B cell (primary cell): ENCODE measurements at regions of chr12 and their contacts with region 1.

Region 1: GRCh38 chr12:132144115-132144812 is at the starts of genes DDX51 and NOC4L:
- DNase-seq: peak; percentile 98
- ATAC-seq: peak; percentile 94
- H3K4me3 ChIP-seq: peak within 1 kb of the TSS; percentile 16 to 90 (median 69)
- H3K4me3 Mint-ChIP-seq: peak within 1 kb of the TSS; percentile 96
- H3K27ac ChIP-seq: peak within 1 kb of the TSS; percentile 47 to 95
- H3K27ac Mint-ChIP-seq: peak within 1 kb of the TSS; percentile 99
- H3K4me1 ChIP-seq: peaks cover 15 to 21% of the 10 kb centered on the region in 2 donors
- H3K4me1 Mint-ChIP-seq: peaks cover 27% of the 10 kb centered on the region
- H3K27me3 ChIP-seq: no peaks in the 10 kb centered on the region
- H3K27me3 Mint-ChIP-seq: no peaks in the 10 kb centered on the region
- CTCF ChIP-seq: no peak
- total RNA-seq, gene DDX51: 46.3 and 51.3 TPM in 2 replicates
- total RNA-seq, gene NOC4L: 21.9 and 23.3 TPM in 2 replicates

Region 2: DNA sequence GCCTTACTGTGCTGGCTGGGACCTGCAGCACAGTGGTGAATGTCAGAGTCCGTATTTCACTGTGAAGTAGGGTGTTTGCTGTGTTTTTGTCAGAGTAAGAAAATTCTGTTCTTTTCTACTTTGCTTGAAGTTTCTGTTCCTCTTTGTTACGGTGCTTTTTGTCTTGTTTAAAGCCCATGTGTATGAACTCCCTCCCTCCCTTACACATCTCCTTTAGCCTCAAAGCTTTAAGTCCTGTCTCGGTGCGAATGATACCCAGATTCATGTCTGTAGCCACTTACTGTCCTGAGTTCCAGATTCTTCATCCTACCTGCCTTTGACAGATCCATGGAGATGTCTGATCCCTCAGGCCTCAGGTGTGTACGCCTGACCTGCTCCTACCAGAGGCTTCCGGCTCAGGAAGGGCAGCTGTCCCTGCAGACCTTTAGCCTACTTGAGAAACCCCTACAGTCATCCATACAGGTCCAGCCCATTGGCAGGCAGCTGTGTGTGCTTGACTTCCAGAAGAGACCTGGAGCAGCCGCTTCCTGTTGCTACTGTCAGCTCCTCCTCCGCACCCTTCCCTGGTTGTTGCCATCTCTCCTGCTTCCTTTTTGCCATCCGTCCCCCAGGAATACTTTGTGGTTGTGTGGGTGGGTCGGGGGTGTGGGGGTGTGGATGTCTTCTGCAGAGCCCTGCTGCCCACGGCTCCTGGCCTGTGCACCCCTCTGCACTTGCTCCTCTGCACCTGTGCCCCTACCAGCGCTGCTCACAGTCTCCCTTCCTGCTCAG is 73.0 kb before region 1 on chr12:
- CTCF ChIA-PET with region 1: no interaction called
- POLR2A ChIA-PET with region 1: no interaction called
- intact Hi-C with region 1: loop called (anchors 1 kb)
- DNase-seq: peak; percentile 78
- ATAC-seq: peak; percentile 78
- H3K4me3 ChIP-seq: peak overlapping the region in 4 of 5 experiments; percentile 41 to 62 (median 57)
- H3K4me3 Mint-ChIP-seq: peak overlapping the region; percentile 80
- H3K27ac ChIP-seq: peak overlapping the region; percentile 74 to 80
- H3K27ac Mint-ChIP-seq: peak overlapping the region; percentile 93
- H3K4me1 ChIP-seq: peaks cover 75 to 83% of the 10 kb centered on the region in 2 donors
- H3K4me1 Mint-ChIP-seq: peaks cover 77% of the 10 kb centered on the region
- H3K27me3 ChIP-seq: no peaks in the 10 kb centered on the region
- H3K27me3 Mint-ChIP-seq: no peaks in the 10 kb centered on the region
- CTCF ChIP-seq: no peak

Region 3: GRCh38 chr12:132189378-132190011 is 45.2 kb after region 1 on chr12:
- CTCF ChIA-PET with region 1: no interaction called
- POLR2A ChIA-PET with region 1: no interaction called
- intact Hi-C with region 1: loop called (anchors 1 kb)
- DNase-seq: peak; percentile 89
- ATAC-seq: peak; percentile 95
- H3K4me3 ChIP-seq: peak overlapping the region; percentile 48 to 69 (median 61)
- H3K4me3 Mint-ChIP-seq: peak overlapping the region; percentile 90
- H3K27ac ChIP-seq: peak overlapping the region; percentile 42 to 47
- H3K27ac Mint-ChIP-seq: peak overlapping the region; percentile 72
- H3K4me1 ChIP-seq: peaks cover 29 to 40% of the 10 kb centered on the region in 2 donors
- H3K4me1 Mint-ChIP-seq: peaks cover 14% of the 10 kb centered on the region
- H3K27me3 ChIP-seq: peaks cover 0 to 2% (median under 1%) of the 10 kb centered on the region in 4 experiments
- H3K27me3 Mint-ChIP-seq: no peaks in the 10 kb centered on the region
- CTCF ChIP-seq: no peak

Region 4: DNA sequence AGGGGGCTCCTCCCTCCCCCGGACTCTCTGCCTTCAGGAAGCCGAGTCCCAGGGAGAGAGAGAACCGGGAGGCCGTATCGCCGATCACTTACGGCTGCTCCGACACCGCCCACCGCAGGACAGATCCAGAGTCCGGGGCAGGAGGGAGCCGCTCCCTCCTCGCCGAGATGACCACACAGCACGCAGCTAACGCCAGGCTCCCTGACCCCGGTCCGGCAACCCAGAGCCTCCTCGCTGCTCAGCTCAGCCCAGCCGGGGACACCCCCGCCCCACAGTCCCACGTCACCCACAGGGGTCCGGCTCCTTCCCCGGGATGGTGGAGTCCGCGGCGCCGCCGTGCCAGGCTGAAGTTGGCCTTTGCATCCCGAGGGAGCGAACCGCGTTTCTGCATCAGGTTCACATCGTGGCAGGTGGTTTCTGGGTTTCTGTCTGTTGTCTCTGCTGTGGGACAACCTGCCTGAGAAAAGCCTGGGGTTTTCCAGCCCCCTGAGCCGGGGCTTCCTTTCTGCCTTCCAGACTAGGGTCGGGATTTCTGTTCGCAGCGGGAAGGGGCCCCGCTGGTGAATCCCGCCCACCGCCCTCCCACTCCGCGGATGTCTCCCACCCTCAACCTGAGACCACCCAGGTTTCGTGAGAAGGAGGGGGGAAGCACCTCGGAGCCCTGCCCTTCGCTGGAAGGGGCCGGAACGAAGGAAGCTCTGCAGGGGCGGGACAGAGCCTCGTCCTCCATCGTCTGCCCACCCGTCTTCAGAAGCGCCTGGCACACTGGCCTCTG is 61.2 kb after region 1 on chr12:
- CTCF ChIA-PET with region 1: no interaction called
- POLR2A ChIA-PET with region 1: no interaction called
- intact Hi-C with region 1: no loop called
- DNase-seq: no peak
- ATAC-seq: no peak
- H3K4me3 ChIP-seq: no peak overlapping the region
- H3K4me3 Mint-ChIP-seq: no peak overlapping the region
- H3K27ac ChIP-seq: no peak overlapping the region
- H3K27ac Mint-ChIP-seq: no peak overlapping the region
- H3K4me1 ChIP-seq: peaks cover 9 to 15% of the 10 kb centered on the region in 2 donors
- H3K4me1 Mint-ChIP-seq: no peaks in the 10 kb centered on the region
- H3K27me3 ChIP-seq: peaks cover 0 to 44% (median 13%) of the 10 kb centered on the region in 4 experiments
- H3K27me3 Mint-ChIP-seq: peaks cover 31% of the 10 kb centered on the region
- CTCF ChIP-seq: no peak

Region 5: DNA sequence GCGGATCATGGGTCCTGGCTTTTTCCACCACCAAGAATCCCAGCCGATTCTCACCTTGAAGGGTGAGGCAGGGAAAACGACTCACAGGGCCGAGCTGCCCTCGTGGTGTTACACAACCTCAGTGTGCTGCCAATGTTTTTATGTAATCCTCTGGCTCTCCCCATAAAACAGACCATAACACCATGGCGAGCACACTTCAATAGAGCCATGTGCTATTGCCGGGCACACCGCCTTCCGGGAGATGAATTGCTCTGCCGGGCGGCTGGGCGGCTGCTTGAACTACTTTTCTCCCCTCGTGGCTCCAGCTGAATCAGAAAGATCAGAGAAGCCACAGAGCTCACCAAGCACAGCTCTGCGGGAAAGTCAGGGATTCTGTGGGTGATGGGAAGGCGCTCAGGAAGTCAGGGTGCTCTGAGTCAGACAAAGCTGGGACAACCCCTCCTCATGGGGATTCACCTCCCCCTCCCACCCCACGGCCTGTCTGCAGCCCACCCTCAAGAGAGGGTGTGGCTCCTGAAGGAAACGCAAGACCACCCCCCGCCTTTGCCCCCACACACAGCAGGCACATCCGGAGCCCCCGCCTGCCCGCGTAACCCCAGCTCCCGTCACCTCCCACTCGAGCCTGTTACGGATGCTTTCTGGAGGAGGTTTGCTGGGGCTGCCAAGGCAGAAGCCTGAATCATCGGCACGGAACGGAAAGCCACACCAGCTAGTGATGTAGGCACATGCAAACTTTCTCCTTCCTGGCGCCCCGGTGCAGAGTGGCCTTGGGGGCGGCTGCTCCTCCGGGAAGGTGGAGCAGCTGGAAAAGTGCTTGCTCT is 183.3 kb after region 1 on chr12:
- CTCF ChIA-PET with region 1: no interaction called
- POLR2A ChIA-PET with region 1: no interaction called
- intact Hi-C with region 1: no loop called
- DNase-seq: no peak
- ATAC-seq: no peak
- H3K4me3 ChIP-seq: no peak overlapping the region
- H3K4me3 Mint-ChIP-seq: no peak overlapping the region
- H3K27ac ChIP-seq: no peak overlapping the region
- H3K27ac Mint-ChIP-seq: no peak overlapping the region
- H3K4me1 ChIP-seq: peaks cover 6 to 11% of the 10 kb centered on the region in 2 donors
- H3K4me1 Mint-ChIP-seq: no peaks in the 10 kb centered on the region
- H3K27me3 ChIP-seq: peaks cover 0 to 28% (median 12%) of the 10 kb centered on the region in 4 experiments
- H3K27me3 Mint-ChIP-seq: peaks cover 39% of the 10 kb centered on the region
- CTCF ChIP-seq: no peak